Panc1 (cell line): ENCODE measurements at regions of chr2 and their contacts with region 1.

Region 1: DNA sequence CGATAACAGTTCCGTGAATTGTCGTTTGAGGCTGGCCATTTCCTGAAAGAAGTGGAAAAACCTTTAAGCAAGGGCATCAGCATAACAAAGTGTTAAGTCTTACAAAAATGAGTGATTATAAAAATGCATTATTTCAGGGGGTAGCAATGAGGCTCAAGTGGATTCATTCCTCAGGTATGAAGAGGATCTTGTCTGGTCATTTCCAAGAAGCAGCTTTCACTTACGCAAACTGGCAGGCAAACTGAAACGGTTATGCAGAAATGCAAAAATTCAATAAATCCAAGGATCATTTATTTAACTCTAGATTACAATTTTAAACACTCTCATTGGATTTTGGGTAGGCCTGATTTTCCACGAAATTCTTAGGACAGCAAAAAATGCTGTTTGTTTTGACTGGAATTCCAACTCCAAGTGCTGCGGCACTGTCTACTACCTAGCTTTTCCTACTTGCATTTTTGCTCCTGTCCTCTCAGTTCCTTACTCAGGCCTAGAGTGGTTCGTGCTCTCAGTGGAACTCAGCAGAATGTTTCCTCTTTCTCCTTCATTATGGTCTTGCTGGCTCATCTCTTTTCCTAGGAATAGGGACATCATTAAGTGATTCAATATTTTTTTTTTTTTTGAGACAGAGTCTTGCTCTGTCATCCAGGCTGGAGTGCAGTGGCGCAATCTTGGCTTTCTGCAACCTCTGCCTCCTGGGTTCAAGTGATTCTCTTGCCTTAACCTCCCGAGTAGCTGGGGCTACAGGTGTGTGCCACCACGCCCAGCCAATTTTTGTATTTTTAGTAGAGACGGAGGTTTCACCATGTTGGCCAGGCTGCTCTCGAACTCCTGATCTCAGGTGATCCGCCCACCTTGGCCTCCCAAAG is 37.8 kb downstream of the GEMIN6 start:
- DNase-seq: no peak
- ATAC-seq: no peak
- H3K4me3 ChIP-seq: no peak overlapping the region
- H3K27ac ChIP-seq: no peak overlapping the region
- H3K4me1 ChIP-seq: no peaks in the 10 kb centered on the region
- H3K27me3 ChIP-seq: no peaks in the 10 kb centered on the region
- CTCF ChIP-seq: no peak

Region 2: DNA sequence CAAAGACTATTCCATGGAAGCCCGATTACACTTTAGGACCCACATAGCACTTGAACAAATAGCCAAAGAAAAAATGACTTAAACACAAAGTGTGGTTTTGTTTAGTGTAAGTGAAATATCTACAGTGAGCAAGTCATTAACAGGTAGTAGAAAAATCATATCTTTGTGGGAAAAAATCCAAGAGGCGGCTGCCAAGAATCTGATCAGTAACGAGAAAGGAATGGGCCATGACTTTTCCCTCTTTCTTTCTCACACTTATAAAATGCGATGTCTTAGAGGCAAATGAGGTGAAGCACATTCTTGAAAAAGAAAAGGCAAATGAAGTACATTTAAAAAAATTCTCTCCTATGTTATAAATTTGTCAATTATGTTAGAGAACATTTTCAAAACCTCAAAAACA is 50.7 kb before region 1 on chr2:
- CTCF ChIA-PET with region 1: interaction called, 12 read pairs
- POLR2A ChIA-PET with region 1: no interaction called
- in situ Hi-C with region 1: no loop called
- intact Hi-C with region 1: no loop called
- DNase-seq: no peak
- ATAC-seq: no peak
- H3K4me3 ChIP-seq: no peak overlapping the region
- H3K27ac ChIP-seq: no peak overlapping the region
- H3K4me1 ChIP-seq: no peaks in the 10 kb centered on the region
- H3K27me3 ChIP-seq: no peaks in the 10 kb centered on the region
- CTCF ChIP-seq: no peak

Region 3: GRCh38 chr2:39099870-39100728 is 284.3 kb after region 1 on chr2:
- CTCF ChIA-PET with region 1: no interaction called
- POLR2A ChIA-PET with region 1: no interaction called
- in situ Hi-C with region 1: no loop called
- intact Hi-C with region 1: no loop called
- DNase-seq: no peak
- ATAC-seq: peak; percentile 63
- H3K4me3 ChIP-seq: no peak overlapping the region
- H3K27ac ChIP-seq: no peak overlapping the region
- H3K4me1 ChIP-seq: no peaks in the 10 kb centered on the region; the same call in 1 of the 2 replicates
- H3K27me3 ChIP-seq: no peaks in the 10 kb centered on the region
- CTCF ChIP-seq: no peak